ENCODE measurements at regions of chr16 and their contacts with region 1.

Region 1: DNA sequence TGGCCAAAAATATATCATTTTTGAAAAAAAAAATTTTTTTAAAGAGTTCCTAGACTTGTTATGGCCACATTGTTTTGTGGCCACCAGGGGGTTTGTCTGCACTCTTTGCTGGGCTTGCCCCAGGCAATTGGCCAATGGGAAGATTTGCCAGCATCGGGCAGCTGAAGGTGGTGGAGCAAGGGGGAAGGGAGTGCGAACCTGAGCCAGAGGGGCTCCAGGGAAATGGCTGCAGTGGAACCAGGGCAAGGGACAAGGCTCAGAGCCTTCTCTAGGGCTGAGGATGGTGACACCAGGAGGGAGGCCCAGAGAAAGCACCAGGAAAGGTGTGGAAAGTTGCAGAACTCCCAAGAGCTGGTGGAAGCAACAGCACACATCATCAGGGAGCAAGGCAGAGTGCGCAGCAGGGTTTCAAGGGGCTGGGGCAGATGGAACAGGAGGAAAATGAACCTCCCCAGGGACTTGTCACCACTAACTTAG is 15.5 kb upstream of the CMIP start:
- DNase-seq: peak; percentile 62 to 76 (median 69)
- H3K4me3 ChIP-seq: no peak overlapping the region
- H3K4me3 Mint-ChIP-seq: peak overlapping the region in 1 of 2 donors; percentile 52
- H3K27ac ChIP-seq: no peak overlapping the region
- H3K27ac Mint-ChIP-seq: peak overlapping the region in 3 of 7 donors; percentile 33 to 59 (median 50)
- H3K4me1 ChIP-seq: peaks cover 47 to 57% of the 10 kb centered on the region in 2 donors
- H3K4me1 Mint-ChIP-seq: peaks cover 54% of the 10 kb centered on the region
- H3K27me3 ChIP-seq: no peaks in the 10 kb centered on the region
- H3K27me3 Mint-ChIP-seq: peaks cover 0 to 8% (median 4%) of the 10 kb centered on the region in 3 donors
- CTCF ChIP-seq: peak; percentile 82

Region 2: GRCh38 chr16:81632392-81633146 is 203.5 kb after region 1 on chr16:
- intact Hi-C with region 1: loop called in 1 of 2 experiments (anchors 5 kb)
- DNase-seq: peak; percentile 92 to 99 (median 92)
- H3K4me3 ChIP-seq: peak overlapping the region in 1 of 3 experiments; percentile 14
- H3K4me3 Mint-ChIP-seq: peak overlapping the region; percentile 22 to 37
- H3K27ac ChIP-seq: peak overlapping the region; percentile 65 to 77
- H3K27ac Mint-ChIP-seq: peak overlapping the region in 6 of 7 donors; percentile 88 to 96 (median 94)
- H3K4me1 ChIP-seq: peaks cover 25 to 40% of the 10 kb centered on the region in 2 donors
- H3K4me1 Mint-ChIP-seq: peaks cover 72% of the 10 kb centered on the region
- H3K27me3 ChIP-seq: no peaks in the 10 kb centered on the region
- H3K27me3 Mint-ChIP-seq: peaks cover 0 to 5% (median 3%) of the 10 kb centered on the region in 3 donors
- CTCF ChIP-seq: no peak